Right ventricle myocardium superior (tissue), 1 donor: ENCODE measurements at regions of chr3 and their contacts with region 1.

Region 1: DNA sequence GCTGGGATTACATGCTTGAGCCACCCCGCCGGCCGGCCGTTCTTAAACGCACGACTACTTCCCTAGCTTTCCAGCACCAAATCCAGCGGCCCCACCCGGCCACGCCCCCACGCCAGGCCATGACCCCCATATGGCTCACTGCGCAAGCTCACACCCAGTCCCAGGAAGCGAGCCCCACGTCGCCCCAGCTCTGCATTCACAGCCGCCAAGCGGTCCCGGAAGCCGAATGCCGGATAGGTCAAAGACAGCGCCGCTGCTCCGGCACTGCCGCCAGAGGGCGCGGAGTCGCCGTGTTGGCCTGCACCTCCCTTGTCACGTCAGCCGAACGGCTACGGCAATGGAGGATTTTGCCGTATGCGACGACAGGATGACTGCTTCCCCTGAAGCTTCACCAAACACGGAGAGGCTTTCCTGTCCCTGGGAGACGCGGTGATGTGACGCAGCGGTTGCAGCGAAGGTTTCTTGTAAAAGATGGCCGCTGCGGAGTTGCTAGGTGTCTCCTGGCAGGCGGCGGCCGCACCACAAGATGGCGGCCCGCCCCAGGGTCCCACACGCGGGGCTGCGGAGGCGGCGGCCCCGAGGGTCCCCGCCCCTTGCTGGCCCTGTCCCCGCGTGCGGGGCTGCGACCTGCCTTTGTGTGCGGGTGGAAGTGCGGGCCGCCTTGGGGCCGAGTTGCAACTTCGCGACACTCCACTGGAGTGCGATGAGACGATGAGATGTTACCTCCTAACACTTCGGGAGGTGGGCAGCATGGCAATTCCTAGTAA is 30.2 kb upstream of the RPN1 start:
- DNase-seq: peak; percentile 100
- ATAC-seq: peak; percentile 99

Region 2: GRCh38 chr3:128714887-128715491 is 34.2 kb after region 1 on chr3:
- intact Hi-C with region 1: no loop called
- DNase-seq: no peak
- ATAC-seq: no peak

Region 3: GRCh38 chr3:128745742-128746141 is 65.0 kb after region 1 on chr3:
- intact Hi-C with region 1: no loop called
- DNase-seq: no peak
- ATAC-seq: no peak

Region 4: DNA sequence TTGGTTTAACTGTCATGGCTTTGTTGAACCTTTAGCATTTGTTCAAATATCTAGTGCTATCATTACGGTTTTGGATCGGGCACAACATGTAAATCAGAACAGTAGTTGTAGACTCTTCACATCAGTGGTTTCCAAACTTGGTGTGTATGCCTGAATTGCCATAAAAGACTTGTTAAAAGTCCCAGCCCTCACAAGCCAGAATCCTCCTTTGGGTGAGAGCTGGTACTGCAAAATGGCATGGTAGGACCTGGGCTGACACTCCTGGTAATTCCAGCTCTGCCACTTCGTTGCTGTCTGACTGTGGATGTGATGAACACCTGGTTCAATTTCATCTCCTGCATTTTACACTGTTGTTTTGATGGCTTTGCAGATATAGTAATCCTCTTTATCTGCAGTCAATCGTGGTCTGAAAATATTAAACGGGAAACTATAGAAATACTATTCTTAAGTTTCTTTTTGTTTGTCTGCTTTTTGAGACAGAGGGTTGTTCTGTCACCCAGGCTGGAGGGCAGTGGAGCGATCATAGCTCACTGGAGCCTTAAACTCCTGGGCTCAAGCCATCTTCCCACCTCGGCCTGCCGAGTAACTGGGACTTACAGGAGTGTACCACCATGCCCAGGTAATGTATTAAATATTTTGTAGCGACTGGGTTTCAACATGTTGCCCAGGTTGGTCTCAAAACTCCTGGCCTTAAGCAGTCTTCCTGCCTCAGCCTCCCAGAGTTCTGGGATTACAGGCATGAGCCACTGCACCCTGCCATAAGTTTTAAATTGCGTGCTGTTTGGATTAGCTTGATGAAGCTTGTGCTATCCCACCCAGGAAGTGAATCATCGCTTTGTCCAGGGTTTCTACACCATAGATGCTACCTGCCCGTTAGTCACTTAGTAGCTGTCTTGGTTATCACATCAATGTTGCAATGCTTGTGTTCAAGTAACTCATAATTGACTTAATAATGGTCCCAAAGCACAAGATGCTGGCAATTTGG is 106.8 kb after region 1 on chr3:
- intact Hi-C with region 1: loop called (anchors 5 kb)
- DNase-seq: no peak
- ATAC-seq: no peak

Region 5: GRCh38 chr3:128845778-128846485 is 165.1 kb after region 1 on chr3:
- intact Hi-C with region 1: loop called (anchors 2 kb)
- DNase-seq: peak; percentile 94
- ATAC-seq: peak; percentile 96